Lower leg skin (tissue), 4 donors: ENCODE measurements at regions of chr17 and their contacts with region 1.

Region 1: GRCh38 chr17:60335289-60335688 is 56.6 kb downstream of the USP32 start:
- DNase-seq: no peak
- H3K4me3 ChIP-seq: no peak overlapping the region
- CTCF ChIP-seq: no peak
- POLR2A ChIP-seq: no peak

Region 2: DNA sequence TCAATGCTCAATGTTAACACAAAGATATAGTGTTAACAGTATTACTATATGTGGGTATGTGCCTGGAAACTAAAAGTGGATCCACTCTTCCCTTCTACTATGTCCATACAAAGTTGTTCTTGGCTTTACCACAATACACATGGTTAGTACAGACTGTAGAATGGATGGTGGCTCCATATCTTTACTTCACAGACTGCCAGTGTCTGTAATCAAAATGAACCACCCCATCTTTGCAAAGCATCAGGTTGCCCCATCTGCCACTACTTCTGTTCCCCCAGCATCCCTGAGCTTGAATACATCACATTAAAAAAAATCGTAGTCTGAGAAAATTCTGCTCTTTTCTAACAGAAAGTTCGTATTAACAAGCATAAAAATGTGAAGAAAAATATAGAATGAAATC is 26.6 kb after region 1 on chr17:
- intact Hi-C with region 1: loop called (anchors 1 kb)
- DNase-seq: no peak
- H3K4me3 ChIP-seq: no peak overlapping the region
- CTCF ChIP-seq: no peak
- POLR2A ChIP-seq: no peak

Region 3: GRCh38 chr17:60398227-60398959 is 63.1 kb after region 1 on chr17:
- intact Hi-C with region 1: no loop called
- DNase-seq: no peak
- H3K4me3 ChIP-seq: no peak overlapping the region
- CTCF ChIP-seq: no peak
- POLR2A ChIP-seq: no peak

Region 4: GRCh38 chr17:60712675-60713074 is 377.4 kb after region 1 on chr17:
- intact Hi-C with region 1: no loop called
- DNase-seq: no peak
- H3K4me3 ChIP-seq: no peak overlapping the region
- CTCF ChIP-seq: no peak
- POLR2A ChIP-seq: no peak

Region 5: DNA sequence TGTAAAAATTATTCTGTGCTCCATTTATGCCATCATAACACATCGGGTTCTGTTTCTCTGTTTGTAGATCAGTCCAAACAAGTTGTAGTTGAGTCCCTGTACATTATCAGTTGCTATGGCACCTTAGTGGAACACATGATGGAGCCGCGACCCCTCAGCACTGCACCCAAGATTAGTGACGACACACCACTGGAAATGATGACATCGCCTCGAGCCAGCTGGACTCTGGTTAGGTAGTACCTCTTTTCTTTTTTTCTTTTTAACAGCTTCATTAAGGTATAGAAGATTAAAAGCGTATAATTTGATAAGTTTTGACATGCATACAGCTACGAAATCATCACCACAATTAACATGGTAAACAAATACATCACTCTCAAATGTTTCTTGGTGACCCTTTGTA is 702.5 kb after region 1 on chr17:
- intact Hi-C with region 1: no loop called
- DNase-seq: no peak
- H3K4me3 ChIP-seq: no peak overlapping the region
- CTCF ChIP-seq: no peak
- POLR2A ChIP-seq: no peak